ENCODE measurements at regions of chr12 and their contacts with region 1.

Region 1: DNA sequence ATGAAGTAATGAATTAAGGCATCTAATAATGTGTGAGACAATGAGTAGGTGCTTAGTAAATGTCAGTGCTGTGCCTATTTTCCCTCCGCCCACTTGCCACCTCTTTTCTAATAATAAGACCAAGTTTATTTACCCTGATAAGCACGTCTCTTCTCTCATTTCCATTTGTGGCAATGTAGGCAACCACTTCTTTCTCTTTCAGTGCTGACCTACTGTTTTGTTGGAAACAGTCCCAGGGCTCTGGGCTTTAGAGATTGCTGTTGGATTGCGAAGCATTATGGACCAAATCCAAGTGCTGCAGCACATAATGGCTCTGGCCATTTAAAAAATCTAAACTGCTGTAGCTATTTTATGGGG is 141.3 kb upstream of the PLEKHG7 start:
- DNase-seq: no peak
- CTCF ChIP-seq: no peak

Region 2: GRCh38 chr12:92136965-92137721 is 424.4 kb before region 1 on chr12:
- in situ Hi-C with region 1: loop called (anchors 10 kb)
- DNase-seq: peak; percentile 41
- CTCF ChIP-seq: no peak

Region 3: DNA sequence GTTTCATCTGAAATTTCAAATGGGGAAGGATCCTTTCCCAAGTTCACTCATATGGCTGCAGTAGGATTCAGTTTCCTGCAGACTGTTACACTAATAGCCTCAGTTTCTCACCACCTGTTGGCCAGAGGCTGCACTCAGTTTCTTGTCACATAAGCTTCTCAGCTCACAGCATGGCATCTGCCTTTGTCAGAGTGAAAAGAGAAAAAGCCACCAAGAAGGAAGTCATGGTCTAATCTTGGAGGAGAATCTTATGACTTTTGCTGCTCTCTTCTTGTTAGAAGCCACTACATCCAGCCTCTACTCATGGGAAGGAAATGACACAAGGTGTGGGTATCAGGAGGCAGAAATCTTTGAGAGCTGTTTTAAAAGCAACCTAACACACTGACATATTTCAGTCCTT is 376.5 kb before region 1 on chr12:
- in situ Hi-C with region 1: no loop called
- DNase-seq: peak; percentile 19
- CTCF ChIP-seq: no peak

Region 4: GRCh38 chr12:92505254-92506231 is 56.0 kb before region 1 on chr12:
- in situ Hi-C with region 1: loop called (anchors 10 kb)
- DNase-seq: no peak
- CTCF ChIP-seq: no peak

Measured in GM13977 (cell line).